ENCODE measurements at regions of chr12 and their contacts with region 1.

Region 1: DNA sequence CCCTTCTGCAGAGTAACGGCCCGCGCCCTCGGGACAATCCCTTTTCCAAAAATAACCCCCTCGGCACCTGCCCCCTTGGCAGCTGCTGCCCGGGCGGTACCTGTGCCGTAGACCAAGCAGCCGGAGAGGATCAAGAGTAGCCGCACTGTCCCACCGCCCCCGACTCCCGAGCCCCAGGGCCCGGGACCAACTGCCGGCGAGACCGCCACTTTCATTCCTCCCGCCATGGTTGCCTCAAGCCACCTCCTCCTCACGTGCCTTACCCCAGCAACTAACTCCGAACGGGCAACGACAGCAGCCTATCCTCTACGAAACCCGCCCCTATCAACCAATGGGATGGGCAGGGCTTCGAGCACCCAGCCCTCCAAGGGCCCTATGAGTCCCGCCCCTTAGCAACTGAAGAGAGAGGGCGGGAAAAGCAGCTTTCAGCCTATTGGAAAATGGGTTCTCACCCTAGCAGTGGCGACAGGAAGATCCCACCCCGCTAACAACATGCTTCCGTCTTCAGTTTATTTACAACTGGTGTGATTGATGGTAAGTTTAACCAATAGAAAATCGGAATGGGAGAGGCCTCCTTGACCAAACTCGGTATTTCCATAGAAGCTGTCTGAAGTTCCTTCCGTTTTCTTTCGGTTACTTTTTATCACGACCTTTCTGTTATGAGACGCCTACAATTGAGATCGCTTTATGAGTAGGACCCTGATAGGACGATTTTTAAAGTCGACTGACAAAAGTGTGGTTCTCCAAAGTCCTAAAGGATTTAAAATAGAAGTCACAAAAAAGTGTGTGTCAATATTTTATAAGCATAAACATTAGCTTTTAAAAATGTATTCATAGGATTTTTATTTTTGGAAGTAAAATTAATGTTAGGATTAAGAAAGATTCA is at the start of gene NEMP1:
- DNase-seq: peak; percentile 99
- ATAC-seq: peak; percentile 97
- H3K4me3 ChIP-seq: peak within 1 kb of the TSS; percentile 55 to 97 (median 87)
- H3K4me3 Mint-ChIP-seq: peak within 1 kb of the TSS; percentile 89
- H3K27ac ChIP-seq: peak within 1 kb of the TSS; percentile 75 to 89
- H3K27ac Mint-ChIP-seq: peak within 1 kb of the TSS; percentile 84
- H3K4me1 ChIP-seq: peaks cover 7 to 18% of the 10 kb centered on the region in 2 donors
- H3K4me1 Mint-ChIP-seq: peaks cover 24% of the 10 kb centered on the region
- H3K27me3 ChIP-seq: no peaks in the 10 kb centered on the region
- H3K27me3 Mint-ChIP-seq: no peaks in the 10 kb centered on the region
- CTCF ChIP-seq: no peak
- total RNA-seq, gene NEMP1: 35.0 and 40.1 TPM in 2 replicates

Region 2: DNA sequence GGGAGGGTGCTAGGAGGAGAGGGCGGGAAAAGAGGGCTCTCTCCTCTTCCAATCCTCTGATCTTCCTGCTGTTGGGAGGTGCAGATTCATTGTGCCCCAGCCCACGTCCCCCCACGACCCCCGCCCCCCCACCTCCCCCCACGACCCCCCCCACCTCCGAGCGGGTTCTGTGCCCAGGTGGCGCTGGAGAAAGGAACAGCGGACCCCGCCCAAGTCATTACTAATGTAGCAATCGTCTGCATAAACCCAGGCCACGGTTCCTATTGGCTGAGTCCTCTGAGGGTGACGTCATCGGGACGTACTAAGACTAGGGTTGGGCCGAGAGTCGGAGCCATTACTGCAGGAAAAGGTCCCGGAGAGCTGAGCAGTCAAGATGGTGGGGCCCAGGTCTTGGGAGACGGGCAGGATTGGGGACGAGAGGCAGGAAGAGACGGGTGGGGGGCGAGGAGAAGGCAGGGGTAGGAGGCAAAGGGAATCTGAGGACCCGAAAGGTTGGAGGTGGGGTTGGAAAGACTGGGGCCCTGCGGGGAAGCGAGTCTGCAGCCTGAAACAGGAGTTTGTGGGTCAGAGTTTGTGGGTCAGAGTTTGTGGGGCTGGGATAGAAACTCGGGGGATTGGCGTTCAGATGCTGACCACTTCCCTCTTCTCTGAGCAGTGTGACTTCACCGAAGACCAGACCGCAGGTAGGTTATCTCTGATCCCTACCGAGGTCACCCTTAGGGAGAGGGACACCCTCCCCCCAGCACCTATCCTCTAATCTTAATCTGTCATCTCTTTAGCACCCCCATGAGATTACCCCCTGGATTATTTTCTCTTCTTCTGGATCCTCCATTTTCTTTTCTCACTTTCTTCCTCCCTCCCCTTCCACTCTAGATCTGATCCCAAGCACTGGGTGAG is 920.5 kb before region 1 on chr12 and contains the start of gene MYL6:
- CTCF ChIA-PET with region 1: no interaction called
- POLR2A ChIA-PET with region 1: no interaction called
- intact Hi-C with region 1: loop called (anchors 10 kb)
- DNase-seq: peak; percentile 96
- ATAC-seq: peak; percentile 87
- H3K4me3 ChIP-seq: peak within 1 kb of the TSS; percentile 80 to 97 (median 94)
- H3K4me3 Mint-ChIP-seq: peak within 1 kb of the TSS; percentile 96
- H3K27ac ChIP-seq: peak within 1 kb of the TSS; percentile 88 to 97
- H3K27ac Mint-ChIP-seq: peak within 1 kb of the TSS; percentile 97
- H3K4me1 ChIP-seq: peaks cover 20 to 40% of the 10 kb centered on the region in 2 donors
- H3K4me1 Mint-ChIP-seq: peaks cover 44% of the 10 kb centered on the region
- H3K27me3 ChIP-seq: no peaks in the 10 kb centered on the region
- H3K27me3 Mint-ChIP-seq: no peaks in the 10 kb centered on the region
- CTCF ChIP-seq: no peak
- total RNA-seq, gene MYL6: 645 and 675 TPM in 2 replicates

Region 3: GRCh38 chr12:57046947-57047890 is 31.5 kb before region 1 on chr12:
- CTCF ChIA-PET with region 1: no interaction called
- POLR2A ChIA-PET with region 1: no interaction called
- intact Hi-C with region 1: no loop called
- DNase-seq: peak; percentile 50
- ATAC-seq: peak; percentile 49
- H3K4me3 ChIP-seq: peak overlapping the region in 2 of 5 experiments; percentile 11 to 38
- H3K4me3 Mint-ChIP-seq: peak overlapping the region; percentile 74
- H3K27ac ChIP-seq: no peak overlapping the region
- H3K27ac Mint-ChIP-seq: peak overlapping the region; percentile 82
- H3K4me1 ChIP-seq: peaks cover 18 to 24% of the 10 kb centered on the region in 2 donors
- H3K4me1 Mint-ChIP-seq: peaks cover 26% of the 10 kb centered on the region
- H3K27me3 ChIP-seq: no peaks in the 10 kb centered on the region
- H3K27me3 Mint-ChIP-seq: no peaks in the 10 kb centered on the region
- CTCF ChIP-seq: no peak

Region 4: GRCh38 chr12:57229634-57230380 is 151.0 kb after region 1 on chr12 and contains the start of gene SHMT2:
- CTCF ChIA-PET with region 1: interaction called, 3 read pairs
- POLR2A ChIA-PET with region 1: no interaction called
- intact Hi-C with region 1: loop called (anchors 5 kb)
- DNase-seq: peak; percentile 95
- ATAC-seq: peak; percentile 56
- H3K4me3 ChIP-seq: peak within 1 kb of the TSS; percentile 73 to 94 (median 89)
- H3K4me3 Mint-ChIP-seq: peak within 1 kb of the TSS; percentile 99
- H3K27ac ChIP-seq: peak within 1 kb of the TSS; percentile 67 to 80
- H3K27ac Mint-ChIP-seq: peak within 1 kb of the TSS; percentile 97
- H3K4me1 ChIP-seq: peaks cover 63 to 78% of the 10 kb centered on the region in 2 donors
- H3K4me1 Mint-ChIP-seq: peaks cover 84% of the 10 kb centered on the region
- H3K27me3 ChIP-seq: peaks cover 0 to 26% (median 10%) of the 10 kb centered on the region in 4 experiments
- H3K27me3 Mint-ChIP-seq: peaks cover 10% of the 10 kb centered on the region
- CTCF ChIP-seq: no peak
- total RNA-seq, gene SHMT2: 147 and 166 TPM in 2 replicates

Measured in B cell (primary cell).